Activated CD4-positive, alpha-beta T cell treated with anti-CD3 and anti-CD28 coated beads for 36 hours (primary cell): ENCODE measurements at regions of chr1 and their contacts with region 1.

Region 1: GRCh38 chr1:192477630-192478029 is 97.9 kb upstream of the RGS1 start:
- DNase-seq: no peak
- ATAC-seq: peak; percentile 67
- H3K4me3 Mint-ChIP-seq: no peak overlapping the region
- H3K27ac Mint-ChIP-seq: no peak overlapping the region
- H3K4me1 Mint-ChIP-seq: peaks cover 2% of the 10 kb centered on the region
- H3K27me3 Mint-ChIP-seq: no peaks in the 10 kb centered on the region

Region 2: GRCh38 chr1:191929383-191929782 is 548.2 kb before region 1 on chr1:
- CTCF ChIA-PET with region 1: no interaction called
- POLR2A ChIA-PET with region 1: no interaction called
- intact Hi-C with region 1: no loop called
- DNase-seq: no peak
- ATAC-seq: no peak
- H3K4me3 Mint-ChIP-seq: no peak overlapping the region
- H3K27ac Mint-ChIP-seq: no peak overlapping the region
- H3K4me1 Mint-ChIP-seq: no peaks in the 10 kb centered on the region
- H3K27me3 Mint-ChIP-seq: no peaks in the 10 kb centered on the region

Region 3: DNA sequence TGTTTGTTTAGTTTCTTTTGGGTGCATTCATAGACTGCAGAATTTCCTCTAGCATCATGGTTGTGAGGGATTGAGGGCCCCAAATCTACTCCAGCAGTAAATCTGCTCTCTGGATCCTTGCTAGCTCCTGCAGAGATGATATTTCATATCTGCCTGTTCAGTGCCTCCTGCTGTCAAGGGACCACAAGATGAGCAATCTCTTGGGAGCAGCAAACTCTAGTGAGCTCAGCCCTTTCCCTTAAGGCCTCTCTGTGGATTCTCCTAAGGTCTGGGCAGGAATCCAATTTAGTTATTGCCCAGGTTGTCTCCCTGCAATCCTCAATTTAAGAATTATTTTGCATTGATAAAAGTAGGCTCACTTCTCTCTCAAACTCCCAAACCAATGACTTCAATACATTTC is 242.5 kb before region 1 on chr1:
- CTCF ChIA-PET with region 1: no interaction called
- POLR2A ChIA-PET with region 1: no interaction called
- intact Hi-C with region 1: no loop called
- DNase-seq: no peak
- ATAC-seq: no peak
- H3K4me3 Mint-ChIP-seq: no peak overlapping the region
- H3K27ac Mint-ChIP-seq: no peak overlapping the region
- H3K4me1 Mint-ChIP-seq: no peaks in the 10 kb centered on the region
- H3K27me3 Mint-ChIP-seq: no peaks in the 10 kb centered on the region

Region 4: GRCh38 chr1:192491804-192492554 is 14.3 kb after region 1 on chr1:
- CTCF ChIA-PET with region 1: interaction called, 13 read pairs
- POLR2A ChIA-PET with region 1: no interaction called
- intact Hi-C with region 1: no loop called
- DNase-seq: no peak
- ATAC-seq: no peak
- H3K4me3 Mint-ChIP-seq: no peak overlapping the region
- H3K27ac Mint-ChIP-seq: no peak overlapping the region
- H3K4me1 Mint-ChIP-seq: peaks cover 10% of the 10 kb centered on the region
- H3K27me3 Mint-ChIP-seq: no peaks in the 10 kb centered on the region

Region 5: GRCh38 chr1:192609110-192610079 is 131.8 kb after region 1 on chr1:
- CTCF ChIA-PET with region 1: interaction called, 30 read pairs
- POLR2A ChIA-PET with region 1: no interaction called
- intact Hi-C with region 1: loop called (anchors 1 kb)
- DNase-seq: peak; percentile 78
- ATAC-seq: peak; percentile 100
- H3K4me3 Mint-ChIP-seq: peak overlapping the region; percentile 35
- H3K27ac Mint-ChIP-seq: peak overlapping the region; percentile 69
- H3K4me1 Mint-ChIP-seq: peaks cover 19% of the 10 kb centered on the region
- H3K27me3 Mint-ChIP-seq: no peaks in the 10 kb centered on the region

Region 6: GRCh38 chr1:193019442-193020026 is 541.9 kb after region 1 on chr1:
- CTCF ChIA-PET with region 1: interaction called, 12 read pairs
- POLR2A ChIA-PET with region 1: no interaction called
- intact Hi-C with region 1: loop called (anchors 1 to 2 kb)
- DNase-seq: no peak
- ATAC-seq: no peak
- H3K4me3 Mint-ChIP-seq: no peak overlapping the region
- H3K27ac Mint-ChIP-seq: no peak overlapping the region
- H3K4me1 Mint-ChIP-seq: no peaks in the 10 kb centered on the region
- H3K27me3 Mint-ChIP-seq: no peaks in the 10 kb centered on the region